ENCODE measurements at regions of chr13 and their contacts with region 1.

Region 1: GRCh38 chr13:32639502-32640105 is 53.4 kb downstream of the PDS5B start:
- DNase-seq: peak; percentile 53 to 73 (median 64)
- ATAC-seq: peak; percentile 80
- H3K4me3 ChIP-seq: no peak overlapping the region
- H3K27ac ChIP-seq: no peak overlapping the region
- H3K4me1 ChIP-seq: peaks cover 7% of the 10 kb centered on the region
- H3K27me3 ChIP-seq: no peaks in the 10 kb centered on the region
- CTCF ChIP-seq: peak; percentile 50 to 79 (median 65)
- POLR2A ChIP-seq: no peak

Region 2: GRCh38 chr13:32594157-32594738 is 45.4 kb before region 1 on chr13:
- intact Hi-C with region 1: loop called (anchors 5 kb)
- DNase-seq: no peak
- ATAC-seq: no peak
- H3K4me3 ChIP-seq: no peak overlapping the region
- H3K27ac ChIP-seq: no peak overlapping the region
- H3K4me1 ChIP-seq: peaks cover 12% of the 10 kb centered on the region
- H3K27me3 ChIP-seq: no peaks in the 10 kb centered on the region
- CTCF ChIP-seq: no peak
- POLR2A ChIP-seq: no peak